ENCODE measurements at regions of chr3 and their contacts with region 1.

Region 1: GRCh38 chr3:112734718-112735350 is 93.9 kb upstream of the CCDC80 start:
- DNase-seq: peak; percentile 73
- H3K4me3 Mint-ChIP-seq: no peak overlapping the region
- H3K27ac Mint-ChIP-seq: no peak overlapping the region
- H3K4me1 Mint-ChIP-seq: peaks cover 42% of the 10 kb centered on the region
- H3K27me3 Mint-ChIP-seq: no peaks in the 10 kb centered on the region

Region 2: DNA sequence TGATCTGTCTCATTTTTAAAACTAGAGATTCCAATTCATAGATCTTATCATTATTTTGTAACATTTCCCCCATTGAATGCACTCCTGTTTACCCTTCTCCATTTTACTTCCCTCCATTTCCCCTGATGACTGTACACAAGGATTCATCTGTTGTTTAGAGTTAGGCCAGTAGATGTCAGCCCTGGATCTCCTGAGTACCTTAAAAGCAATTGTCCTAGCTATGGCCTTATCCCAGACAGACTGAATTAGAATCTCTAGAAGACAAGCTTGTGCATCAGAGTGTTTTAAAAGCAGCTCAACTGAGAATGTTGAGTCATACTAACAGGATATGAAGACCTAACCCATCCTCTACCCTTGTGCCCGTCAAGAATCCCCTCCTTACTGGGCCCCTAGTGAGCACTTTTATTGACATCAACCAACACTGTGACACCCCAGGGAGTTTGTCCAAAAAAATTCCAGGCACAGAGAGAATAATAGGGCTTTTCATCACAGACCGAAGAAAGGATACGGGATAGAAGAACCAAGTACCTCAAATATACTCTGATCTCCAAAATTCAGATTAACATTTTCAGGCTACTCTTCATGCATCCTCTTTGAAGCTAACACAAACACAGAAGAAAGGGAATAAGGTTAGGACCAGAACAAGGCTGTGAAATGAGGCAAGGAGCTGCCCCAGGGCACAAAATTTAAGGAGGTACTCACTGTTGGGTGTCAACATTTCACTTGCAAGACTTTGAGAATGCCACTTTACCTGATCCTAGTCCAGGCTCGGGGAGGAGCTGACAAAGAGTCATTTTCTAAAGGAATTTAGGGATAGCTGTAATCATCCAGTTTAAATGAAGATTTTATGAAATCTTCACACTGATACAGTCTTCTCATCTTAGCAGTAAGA is 1156.8 kb before region 1 on chr3:
- CTCF ChIA-PET with region 1: no interaction called
- POLR2A ChIA-PET with region 1: no interaction called
- intact Hi-C with region 1: no loop called
- DNase-seq: no peak
- H3K4me3 Mint-ChIP-seq: peak overlapping the region; percentile 35
- H3K27ac Mint-ChIP-seq: peak overlapping the region; percentile 83
- H3K4me1 Mint-ChIP-seq: peaks cover 73% of the 10 kb centered on the region
- H3K27me3 Mint-ChIP-seq: no peaks in the 10 kb centered on the region

Region 3: GRCh38 chr3:112555535-112556170 is 179.2 kb before region 1 on chr3:
- CTCF ChIA-PET with region 1: no interaction called
- POLR2A ChIA-PET with region 1: no interaction called
- intact Hi-C with region 1: no loop called
- DNase-seq: no peak
- H3K4me3 Mint-ChIP-seq: no peak overlapping the region
- H3K27ac Mint-ChIP-seq: no peak overlapping the region
- H3K4me1 Mint-ChIP-seq: peaks cover 48% of the 10 kb centered on the region
- H3K27me3 Mint-ChIP-seq: no peaks in the 10 kb centered on the region

Region 4: GRCh38 chr3:112582244-112582874 is 152.5 kb before region 1 on chr3:
- CTCF ChIA-PET with region 1: interaction called, 18 read pairs
- POLR2A ChIA-PET with region 1: no interaction called
- intact Hi-C with region 1: loop called (anchors 10 kb)
- DNase-seq: peak; percentile 56
- H3K4me3 Mint-ChIP-seq: no peak overlapping the region
- H3K27ac Mint-ChIP-seq: no peak overlapping the region
- H3K4me1 Mint-ChIP-seq: peaks cover 5% of the 10 kb centered on the region
- H3K27me3 Mint-ChIP-seq: no peaks in the 10 kb centered on the region

Region 5: DNA sequence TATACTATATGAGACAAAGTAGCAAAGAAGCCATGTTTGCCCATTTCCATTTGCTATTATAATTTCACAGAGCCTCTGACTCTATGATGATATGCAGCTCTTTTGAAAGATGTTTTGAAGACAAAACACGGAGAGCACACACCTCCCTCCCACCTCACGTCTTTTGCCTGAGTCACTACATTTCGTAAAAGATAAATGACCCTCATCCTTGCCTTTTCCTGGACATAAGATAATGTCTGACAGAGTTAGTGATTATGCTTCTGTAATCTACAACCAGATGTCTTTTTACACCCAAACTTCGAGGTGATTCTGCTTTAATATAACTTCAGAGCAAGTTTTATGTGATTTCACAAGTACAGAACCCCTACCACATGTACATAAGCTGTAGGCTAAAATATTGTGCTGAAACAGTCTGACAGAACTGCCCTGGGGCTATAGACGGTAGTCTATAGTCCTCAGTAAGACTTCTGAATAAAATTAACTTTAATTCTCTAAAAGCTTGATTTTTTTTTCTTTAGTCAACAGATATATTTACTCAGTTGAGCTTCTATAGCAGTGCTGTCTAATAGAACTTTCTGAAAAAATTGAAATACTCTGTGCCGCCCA is 11.9 kb after region 1 on chr3:
- CTCF ChIA-PET with region 1: interaction called, 17 read pairs
- POLR2A ChIA-PET with region 1: no interaction called
- intact Hi-C with region 1: no loop called
- DNase-seq: no peak
- H3K4me3 Mint-ChIP-seq: no peak overlapping the region
- H3K27ac Mint-ChIP-seq: no peak overlapping the region
- H3K4me1 Mint-ChIP-seq: peaks cover 30% of the 10 kb centered on the region
- H3K27me3 Mint-ChIP-seq: no peaks in the 10 kb centered on the region

Region 6: DNA sequence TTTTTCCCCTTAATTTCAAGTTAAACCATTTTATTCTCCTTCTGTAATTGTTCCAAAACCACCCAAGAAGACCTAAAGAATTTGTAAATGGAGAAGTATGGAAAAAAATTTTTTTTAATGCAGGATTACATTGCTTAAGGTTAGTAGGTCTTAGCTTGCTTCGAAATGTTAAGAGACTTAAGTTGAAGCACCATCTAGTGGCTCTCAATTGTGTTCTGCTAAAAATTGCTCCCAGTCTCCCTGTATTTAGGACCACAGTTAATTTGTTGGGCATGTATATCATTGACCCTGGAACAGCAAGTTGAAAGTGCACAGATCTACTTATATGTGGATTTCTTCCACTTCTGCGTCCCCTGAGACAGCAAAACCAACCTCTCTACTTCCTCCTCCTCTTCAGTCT is 79.4 kb after region 1 on chr3:
- CTCF ChIA-PET with region 1: interaction called, 35 read pairs
- POLR2A ChIA-PET with region 1: no interaction called
- intact Hi-C with region 1: loop called (anchors 1 kb)
- DNase-seq: no peak
- H3K4me3 Mint-ChIP-seq: no peak overlapping the region
- H3K27ac Mint-ChIP-seq: no peak overlapping the region
- H3K4me1 Mint-ChIP-seq: peaks cover 20% of the 10 kb centered on the region
- H3K27me3 Mint-ChIP-seq: no peaks in the 10 kb centered on the region

Region 7: DNA sequence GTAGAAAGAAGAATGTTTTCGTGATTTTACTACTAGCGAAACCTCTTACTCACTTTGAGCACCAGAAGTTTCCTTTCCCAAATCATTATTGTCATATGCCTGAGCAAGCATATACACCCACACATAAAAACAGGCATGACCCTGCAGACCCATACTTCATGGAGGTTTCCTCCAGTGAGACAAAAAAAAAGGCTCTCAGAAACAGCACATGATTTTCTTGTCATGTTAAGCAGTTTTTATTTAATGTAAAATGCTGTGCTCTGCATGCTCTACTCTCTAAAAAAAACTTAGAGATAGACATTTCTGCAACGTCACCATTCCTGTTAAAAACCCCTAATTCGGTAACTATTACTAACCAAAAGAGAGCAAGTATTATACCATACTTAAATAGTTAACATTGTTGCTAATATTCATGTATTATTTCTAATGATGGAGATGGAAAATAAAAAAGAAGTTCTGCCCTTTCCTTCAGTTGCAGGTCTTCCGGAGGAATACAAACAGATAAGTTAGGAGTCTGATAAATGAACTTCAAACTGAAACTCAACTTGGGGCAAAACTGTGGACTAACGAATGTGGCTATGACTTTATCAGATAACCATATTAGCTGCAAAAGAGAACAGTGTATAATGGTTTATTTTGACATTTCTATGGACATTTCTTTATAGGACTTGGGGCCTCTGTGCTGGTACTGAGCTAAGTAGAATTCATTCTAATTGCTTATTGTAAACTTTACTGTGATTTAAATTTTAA is 224.2 kb after region 1 on chr3:
- CTCF ChIA-PET with region 1: interaction called, 7 read pairs
- POLR2A ChIA-PET with region 1: no interaction called
- intact Hi-C with region 1: loop called (anchors 5 kb)
- DNase-seq: peak; percentile 42
- H3K4me3 Mint-ChIP-seq: peak overlapping the region; percentile 69
- H3K27ac Mint-ChIP-seq: peak overlapping the region; percentile 78
- H3K4me1 Mint-ChIP-seq: peaks cover 48% of the 10 kb centered on the region
- H3K27me3 Mint-ChIP-seq: no peaks in the 10 kb centered on the region

Region 8: GRCh38 chr3:112979240-112979832 is 244.5 kb after region 1 on chr3:
- CTCF ChIA-PET with region 1: interaction called, 156 read pairs
- POLR2A ChIA-PET with region 1: interaction called, 11 read pairs
- intact Hi-C with region 1: loop called (anchors 1 kb)
- DNase-seq: no peak
- H3K4me3 Mint-ChIP-seq: no peak overlapping the region
- H3K27ac Mint-ChIP-seq: no peak overlapping the region
- H3K4me1 Mint-ChIP-seq: peaks cover 68% of the 10 kb centered on the region
- H3K27me3 Mint-ChIP-seq: no peaks in the 10 kb centered on the region

Region 9: GRCh38 chr3:113035387-113035982 is 300.7 kb after region 1 on chr3:
- CTCF ChIA-PET with region 1: interaction called, 12 read pairs
- POLR2A ChIA-PET with region 1: no interaction called
- intact Hi-C with region 1: no loop called
- DNase-seq: peak; percentile 17
- H3K4me3 Mint-ChIP-seq: no peak overlapping the region
- H3K27ac Mint-ChIP-seq: no peak overlapping the region
- H3K4me1 Mint-ChIP-seq: no peaks in the 10 kb centered on the region
- H3K27me3 Mint-ChIP-seq: no peaks in the 10 kb centered on the region

Measured in activated CD4-positive, alpha-beta memory T cell treated with anti-CD3 and anti-CD28 coated beads for 36 hours (primary cell).